ENCODE measurements at regions of chr15 and their contacts with region 1.

Region 1: GRCh38 chr15:64706011-64706911 is 69.1 kb downstream of the RBPMS2 start:
- DNase-seq: no peak
- ATAC-seq: no peak
- H3K4me3 Mint-ChIP-seq: no peak overlapping the region
- H3K27ac Mint-ChIP-seq: no peak overlapping the region
- H3K4me1 Mint-ChIP-seq: peaks cover 19% of the 10 kb centered on the region
- H3K27me3 Mint-ChIP-seq: no peaks in the 10 kb centered on the region
- CTCF ChIP-seq: no peak

Region 2: DNA sequence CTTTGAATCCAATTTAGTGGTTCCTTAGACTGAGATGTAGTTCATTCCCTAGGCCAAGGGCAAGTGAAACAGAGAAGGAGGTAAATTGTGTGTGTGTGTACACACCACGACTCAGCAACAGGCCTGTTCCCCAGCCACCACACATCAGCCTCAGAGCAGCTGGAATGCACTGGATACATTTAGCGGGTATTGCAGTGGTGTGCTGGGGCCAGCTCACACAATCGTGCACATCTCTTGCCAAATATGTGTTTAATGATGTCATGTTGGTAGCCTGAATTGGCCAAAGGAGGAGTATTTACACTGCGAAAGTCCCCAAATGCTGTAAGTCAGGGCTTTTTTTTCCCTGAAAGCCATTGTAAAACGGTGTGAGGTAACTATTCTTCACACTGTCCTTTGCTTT is 13.1 kb before region 1 on chr15:
- CTCF ChIA-PET with region 1: interaction called, 11 read pairs
- POLR2A ChIA-PET with region 1: interaction called, 4 read pairs
- intact Hi-C with region 1: no loop called
- DNase-seq: no peak
- ATAC-seq: no peak
- H3K4me3 Mint-ChIP-seq: no peak overlapping the region
- H3K27ac Mint-ChIP-seq: peak overlapping the region; percentile 13
- H3K4me1 Mint-ChIP-seq: peaks cover 23% of the 10 kb centered on the region
- H3K27me3 Mint-ChIP-seq: no peaks in the 10 kb centered on the region
- CTCF ChIP-seq: no peak

Measured in activated CD8-positive, alpha-beta T cell treated with anti-CD3 and anti-CD28 coated beads for 36 hours (primary cell).